Right ventricle myocardium inferior (tissue), 1 donor: ENCODE measurements at regions of chr12 and their contacts with region 1.

Region 1: GRCh38 chr12:81644503-81644902 is 114.6 kb downstream of the PPFIA2 start:
- DNase-seq: no peak
- ATAC-seq: no peak

Region 2: DNA sequence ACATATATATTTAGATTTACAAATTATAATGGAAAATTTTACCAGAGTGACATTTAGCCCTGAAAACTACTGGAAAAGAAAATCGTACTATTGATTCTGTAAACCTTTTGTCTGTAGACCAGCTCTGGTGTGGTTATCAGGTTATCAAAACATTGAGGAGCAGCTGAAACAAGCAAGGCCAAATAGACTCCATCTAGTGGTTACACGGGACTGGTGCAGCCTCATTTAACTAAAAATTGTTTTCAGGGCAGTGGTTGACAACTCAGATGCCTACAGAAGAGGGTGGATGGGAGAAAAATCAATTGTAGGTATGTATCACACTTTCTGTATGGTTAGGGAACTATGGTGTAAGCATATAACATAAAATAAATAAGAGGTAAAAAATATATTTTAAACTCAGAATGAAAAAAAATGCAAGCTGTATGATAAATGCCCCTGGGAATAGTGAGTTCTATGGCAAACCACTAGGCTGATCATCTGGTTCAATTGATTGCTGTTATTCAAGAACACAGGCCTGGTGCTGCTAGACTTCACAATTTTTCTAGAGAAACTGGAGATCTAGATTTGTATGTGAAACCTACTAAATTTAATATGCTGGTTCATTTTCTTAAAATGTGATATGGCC is 515.5 kb before region 1 on chr12:
- intact Hi-C with region 1: no loop called
- DNase-seq: no peak
- ATAC-seq: peak; percentile 20

Region 3: DNA sequence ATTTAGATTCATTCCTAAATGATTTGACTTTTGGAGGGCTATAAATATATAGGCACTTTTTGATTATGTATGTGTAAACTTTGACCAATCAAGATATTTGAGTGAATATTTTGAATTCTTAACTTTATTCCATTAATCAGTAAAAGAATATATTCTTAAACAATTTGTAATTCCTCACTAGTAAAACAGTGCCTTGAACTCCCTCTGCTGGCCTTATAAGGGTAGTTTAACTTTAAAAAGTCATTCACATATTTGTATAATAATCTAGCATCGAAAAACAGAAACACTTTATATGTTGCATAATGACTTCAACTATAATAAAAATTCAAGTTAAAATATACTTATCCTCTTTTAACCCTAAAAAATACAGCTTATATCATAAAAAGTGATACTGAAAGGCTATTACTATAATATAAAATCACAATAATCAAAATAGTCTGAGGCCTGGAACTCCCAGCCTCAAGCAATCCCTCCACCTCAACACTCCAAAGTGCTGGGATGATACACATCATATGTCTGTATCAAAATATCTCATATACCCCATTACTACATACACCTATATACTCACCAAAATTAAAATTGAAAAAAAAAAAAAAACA is 682.5 kb after region 1 on chr12:
- intact Hi-C with region 1: loop called (anchors 2 kb)
- DNase-seq: no peak
- ATAC-seq: no peak